Activated T-helper 2 cell treated with anti-CD3 and anti-CD28 coated beads, Interferon-gamma antibody, Interleukin-2, Interleukin-4, amounts not matched to agents 10 μg/mL and 5 μg/mL and 100 μg/mL, durations not matched to agents 14 hours and 24 hours and 36 hours (primary cell): ENCODE measurements at regions of chr22 and their contacts with region 1.

Region 1: GRCh38 chr22:25777870-25778269 is 35.9 kb downstream of the MYO18B start:
- DNase-seq: no peak
- H3K4me3 Mint-ChIP-seq: no peak overlapping the region
- H3K27ac Mint-ChIP-seq: peak overlapping the region; percentile 1
- H3K4me1 Mint-ChIP-seq: peaks cover 10% of the 10 kb centered on the region
- H3K27me3 Mint-ChIP-seq: no peaks in the 10 kb centered on the region

Region 2: DNA sequence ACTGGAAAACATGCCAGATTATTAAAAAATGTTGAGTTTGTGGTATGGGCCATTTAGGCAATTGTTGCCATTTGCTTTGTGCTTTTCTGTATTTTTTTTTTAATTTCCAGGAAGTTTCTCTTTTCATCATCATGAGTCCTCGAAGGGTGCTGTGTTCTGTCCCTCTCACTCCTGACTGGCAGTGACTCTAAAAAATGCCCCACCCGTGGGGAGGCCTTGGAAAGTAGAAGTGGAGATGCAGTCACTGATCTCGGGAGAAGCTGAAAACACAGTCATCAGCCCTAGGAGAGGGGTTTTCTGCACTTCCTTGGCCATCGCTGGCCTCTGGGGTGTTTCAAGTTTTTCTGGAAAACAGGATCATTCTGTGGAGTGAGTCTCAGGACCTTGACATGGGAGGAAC is 311.9 kb before region 1 on chr22:
- intact Hi-C with region 1: loop called (anchors 1 kb)
- DNase-seq: no peak
- H3K4me3 Mint-ChIP-seq: no peak overlapping the region
- H3K27ac Mint-ChIP-seq: peak overlapping the region; percentile 33
- H3K4me1 Mint-ChIP-seq: peaks cover 18% of the 10 kb centered on the region
- H3K27me3 Mint-ChIP-seq: no peaks in the 10 kb centered on the region

Region 3: GRCh38 chr22:25709758-25710157 is 68.1 kb before region 1 on chr22:
- intact Hi-C with region 1: no loop called
- DNase-seq: peak; percentile 43
- H3K4me3 Mint-ChIP-seq: peak overlapping the region; percentile 16
- H3K27ac Mint-ChIP-seq: peak overlapping the region; percentile 91
- H3K4me1 Mint-ChIP-seq: peaks cover 44% of the 10 kb centered on the region
- H3K27me3 Mint-ChIP-seq: no peaks in the 10 kb centered on the region